BJ (cell line): ENCODE measurements at regions of chr11 and their contacts with region 1.

Region 1: DNA sequence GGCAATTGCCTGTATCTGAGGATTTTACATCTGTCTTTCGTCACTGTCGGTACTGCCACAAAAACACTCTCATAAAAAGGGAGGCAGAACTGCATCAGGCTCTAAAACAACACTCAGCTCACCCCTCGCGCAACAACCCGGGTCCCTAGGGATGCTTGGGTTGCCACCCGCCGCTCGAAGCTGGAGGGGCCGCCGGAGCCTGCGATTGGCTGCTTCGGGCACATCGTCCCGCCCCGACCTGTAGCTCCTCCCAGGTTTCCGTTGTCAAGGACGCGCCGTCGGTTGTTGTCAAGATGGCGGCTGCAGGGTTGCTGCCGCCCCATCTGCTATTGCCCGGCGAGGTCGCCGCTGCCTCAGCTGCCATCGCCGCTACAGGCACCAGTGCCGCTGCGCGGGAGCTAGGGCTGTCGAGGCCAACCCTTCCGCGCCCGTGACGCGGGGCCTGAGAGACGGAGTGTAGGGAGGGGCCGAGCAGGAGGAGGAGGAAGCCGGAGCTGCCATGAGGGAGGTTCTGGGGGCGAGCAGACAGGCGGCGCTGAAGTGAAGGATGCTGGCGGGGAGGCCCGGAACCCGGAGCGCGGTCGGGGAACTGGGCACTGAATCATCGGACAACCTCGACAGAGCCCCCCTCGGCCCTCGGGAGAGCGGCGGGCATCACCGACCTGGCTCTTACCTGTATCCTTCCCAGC is at the start of gene CEP126:
- DNase-seq: peak; percentile 78
- H3K4me3 ChIP-seq: peak within 1 kb of the TSS; percentile 60
- H3K27me3 ChIP-seq: no peaks in the 10 kb centered on the region
- CTCF ChIP-seq: peak; percentile 73
- polyA plus RNA-seq, gene CEP126: 1.5 and 2.9 TPM in 2 replicates

Region 2: GRCh38 chr11:101866619-101867491 is 48.0 kb before region 1 on chr11:
- CTCF ChIA-PET with region 1: interaction called, 13 read pairs
- POLR2A ChIA-PET with region 1: interaction called, 13 read pairs
- DNase-seq: peak; percentile 47
- H3K4me3 ChIP-seq: no peak overlapping the region
- H3K27me3 ChIP-seq: no peaks in the 10 kb centered on the region
- CTCF ChIP-seq: no peak

Region 3: DNA sequence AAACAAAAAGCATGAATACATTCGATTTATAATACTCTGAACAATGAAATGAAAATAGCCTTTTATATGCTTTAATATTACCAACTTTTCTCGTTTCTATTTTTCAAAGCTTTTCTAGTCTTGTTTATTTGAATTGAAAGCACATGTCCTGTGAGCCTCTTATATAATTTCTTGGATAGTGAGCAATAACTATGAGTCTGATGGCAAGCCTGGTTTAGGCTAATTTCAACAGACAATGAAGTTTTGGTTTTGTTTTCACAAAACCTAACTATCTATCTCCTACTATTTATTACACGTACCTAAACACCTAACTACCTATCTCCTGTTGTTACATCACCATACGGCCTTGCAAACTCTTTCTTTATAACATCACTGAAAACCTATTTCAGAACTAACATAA is 29.3 kb before region 1 on chr11:
- CTCF ChIA-PET with region 1: no interaction called
- POLR2A ChIA-PET with region 1: no interaction called
- DNase-seq: no peak
- H3K4me3 ChIP-seq: no peak overlapping the region
- H3K27me3 ChIP-seq: no peaks in the 10 kb centered on the region
- CTCF ChIP-seq: no peak

Region 4: GRCh38 chr11:101996111-101996510 is 81.2 kb after region 1 on chr11:
- CTCF ChIA-PET with region 1: no interaction called
- POLR2A ChIA-PET with region 1: no interaction called
- DNase-seq: no peak
- H3K4me3 ChIP-seq: no peak overlapping the region
- H3K27me3 ChIP-seq: no peaks in the 10 kb centered on the region
- CTCF ChIP-seq: no peak

Region 5: GRCh38 chr11:102036757-102037156 is 121.9 kb after region 1 on chr11:
- CTCF ChIA-PET with region 1: no interaction called
- POLR2A ChIA-PET with region 1: no interaction called
- DNase-seq: no peak
- H3K4me3 ChIP-seq: no peak overlapping the region
- H3K27me3 ChIP-seq: no peaks in the 10 kb centered on the region
- CTCF ChIP-seq: no peak